ENCODE measurements at regions of chr17 and their contacts with region 1.

Region 1: GRCh38 chr17:56913864-56914640 is at the start of gene TRIM25:
- DNase-seq: peak; percentile 75 to 93 (median 80)
- H3K4me3 ChIP-seq: peak within 1 kb of the TSS; percentile 79 to 91
- H3K4me3 Mint-ChIP-seq: peak within 1 kb of the TSS; percentile 80 to 97 (median 90)
- H3K27ac ChIP-seq: peak within 1 kb of the TSS; percentile 85
- H3K27ac Mint-ChIP-seq: peak within 1 kb of the TSS; percentile 78 to 98 (median 94)
- H3K4me1 ChIP-seq: peaks cover 43% of the 10 kb centered on the region
- H3K4me1 Mint-ChIP-seq: peaks cover 33 to 44% (median 40%) of the 10 kb centered on the region in 4 donors
- H3K27me3 ChIP-seq: no peaks in the 10 kb centered on the region
- H3K27me3 Mint-ChIP-seq: no peaks in the 10 kb centered on the region
- total RNA-seq, gene TRIM25: 58.4 to 62.7 TPM

Region 2: DNA sequence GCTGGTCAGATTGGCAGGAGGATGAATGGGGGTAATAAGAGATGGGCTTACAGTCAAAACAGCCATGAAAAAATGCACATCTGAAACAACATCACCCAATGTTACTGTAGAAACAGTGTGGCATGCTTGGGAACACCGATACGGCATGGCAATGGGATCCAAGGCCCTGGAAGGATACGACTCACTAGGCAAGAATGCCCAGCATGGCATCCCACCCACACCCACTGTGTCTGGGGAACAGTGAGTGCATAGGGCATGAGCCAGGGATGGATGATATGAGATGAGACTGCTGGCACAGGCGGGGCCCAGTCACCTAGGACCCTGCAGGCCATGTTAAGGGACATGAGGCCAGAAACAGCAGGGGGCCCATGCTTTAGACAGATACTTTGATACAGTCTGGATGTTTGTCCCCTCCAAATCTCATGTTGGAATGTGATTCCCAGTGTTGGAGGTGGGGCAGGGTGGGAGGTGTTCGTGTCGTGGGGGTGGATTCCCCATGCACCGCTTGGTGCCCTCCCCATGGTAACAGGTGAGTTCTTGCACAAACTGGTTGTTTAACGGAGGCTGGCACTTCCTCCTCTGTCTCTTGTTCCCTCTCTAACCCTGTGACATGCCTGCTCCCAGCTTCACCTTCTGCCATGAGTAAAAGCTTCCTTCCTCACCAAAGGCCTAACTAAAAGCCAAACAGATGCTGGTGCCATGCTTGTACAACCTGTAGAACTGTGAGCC is 11.5 kb before region 1 on chr17:
- CTCF ChIA-PET with region 1: interaction called, 5 read pairs
- POLR2A ChIA-PET with region 1: interaction called, 14 read pairs
- intact Hi-C with region 1: no loop called
- DNase-seq: no peak
- H3K4me3 ChIP-seq: no peak overlapping the region
- H3K4me3 Mint-ChIP-seq: no peak overlapping the region
- H3K27ac ChIP-seq: no peak overlapping the region
- H3K27ac Mint-ChIP-seq: peak overlapping the region in 2 of 7 donors; percentile 16 to 24
- H3K4me1 ChIP-seq: no peaks in the 10 kb centered on the region
- H3K4me1 Mint-ChIP-seq: peaks cover 6 to 16% (median 10%) of the 10 kb centered on the region in 4 donors
- H3K27me3 ChIP-seq: no peaks in the 10 kb centered on the region
- H3K27me3 Mint-ChIP-seq: no peaks in the 10 kb centered on the region

Measured in CD4-positive, alpha-beta memory T cell (primary cell).